ENCODE measurements at regions of chr14 and their contacts with region 1.

Region 1: DNA sequence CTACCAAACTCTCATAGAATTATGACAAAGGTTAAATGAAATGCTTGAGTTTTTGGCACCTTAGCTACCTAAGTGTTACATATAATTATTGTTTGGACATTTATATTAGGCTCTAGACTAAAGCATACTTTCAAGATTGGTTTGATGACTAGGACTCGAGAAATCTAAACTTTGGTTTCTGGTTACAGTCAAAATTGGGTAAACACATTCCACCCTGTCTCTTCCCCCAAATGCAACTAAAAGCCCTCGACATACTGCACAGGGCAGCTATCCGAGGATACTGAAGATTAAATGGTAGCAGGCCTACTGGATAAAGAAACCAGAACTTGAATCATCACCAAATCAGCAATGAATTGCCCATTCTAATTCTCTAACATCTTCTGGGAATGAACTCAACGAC is 369.1 kb downstream of the PRKD1 start:
- DNase-seq: no peak
- H3K4me3 ChIP-seq: no peak overlapping the region
- H3K27ac ChIP-seq: peak overlapping the region in 2 of 4 donors; percentile 12 to 41
- H3K4me1 ChIP-seq: peaks cover 0 to 3% (median 0%) of the 10 kb centered on the region in 4 donors
- H3K27me3 ChIP-seq: no peaks in the 10 kb centered on the region
- CTCF ChIP-seq: no peak
- EP300 ChIP-seq: no peak
- POLR2A ChIP-seq: no peak

Region 2: GRCh38 chr14:30214461-30215090 is 656.1 kb after region 1 on chr14:
- in situ Hi-C with region 1: loop called in 2 of 4 experiments (anchors 10 to 25 kb)
- intact Hi-C with region 1: no loop called
- DNase-seq: no peak
- H3K4me3 ChIP-seq: no peak overlapping the region
- H3K27ac ChIP-seq: no peak overlapping the region
- H3K4me1 ChIP-seq: no peaks in the 10 kb centered on the region
- H3K27me3 ChIP-seq: no peaks in the 10 kb centered on the region
- CTCF ChIP-seq: peak; percentile 37 to 47 (median 42)
- EP300 ChIP-seq: no peak
- POLR2A ChIP-seq: no peak

Region 3: DNA sequence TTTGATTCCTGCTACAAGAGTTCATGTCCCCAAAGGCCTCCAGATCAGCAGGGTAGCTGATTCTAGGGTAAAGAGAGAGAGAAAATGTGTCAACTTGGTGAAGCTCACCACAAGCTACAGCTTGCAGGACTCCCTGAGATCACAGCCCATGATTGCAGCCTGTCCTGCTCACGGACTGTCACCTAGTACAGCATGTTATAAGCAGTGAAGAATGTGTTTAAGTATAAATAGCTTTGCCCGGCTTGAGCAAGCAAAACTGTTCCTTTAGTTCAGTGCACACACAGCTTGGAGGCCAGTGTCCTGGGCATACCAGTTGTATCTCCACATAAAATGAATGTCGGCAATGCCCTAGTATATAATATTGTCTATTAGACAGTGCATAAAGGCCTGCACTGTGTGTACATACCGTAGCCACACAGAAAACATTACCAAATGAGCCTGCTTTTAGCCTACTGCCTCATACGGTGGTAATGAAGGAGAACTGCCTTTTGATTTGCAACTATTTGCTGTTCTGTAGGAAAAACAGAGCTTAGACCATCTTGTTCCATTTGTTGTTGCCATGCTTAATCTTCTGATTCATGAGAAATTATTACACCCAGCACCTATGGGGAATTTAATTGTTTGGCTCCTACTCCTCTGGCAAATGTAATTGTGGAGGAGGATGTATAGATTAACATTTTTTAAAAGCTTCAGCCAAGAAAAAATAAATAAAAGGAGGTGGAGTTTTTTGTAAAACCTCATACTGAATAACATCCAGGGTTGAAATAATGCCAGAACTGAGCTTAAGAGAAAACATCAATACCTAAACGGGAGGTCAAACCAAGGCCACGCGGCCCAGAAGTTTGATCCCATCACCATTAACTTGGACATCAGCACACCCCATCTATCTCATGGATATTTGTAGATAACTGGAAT is 892.4 kb after region 1 on chr14:
- in situ Hi-C with region 1: no loop called
- intact Hi-C with region 1: no loop called
- DNase-seq: no peak
- H3K4me3 ChIP-seq: no peak overlapping the region
- H3K27ac ChIP-seq: no peak overlapping the region
- H3K4me1 ChIP-seq: no peaks in the 10 kb centered on the region
- H3K27me3 ChIP-seq: no peaks in the 10 kb centered on the region
- CTCF ChIP-seq: no peak
- EP300 ChIP-seq: no peak
- POLR2A ChIP-seq: no peak